Prostate gland (tissue), 2 donors: ENCODE measurements at regions of chr2 and their contacts with region 1.

Region 1: GRCh38 chr2:67840460-67841068 is 222.2 kb downstream of the C1D start:
- DNase-seq: peak; percentile 61
- H3K4me3 ChIP-seq: no peak overlapping the region
- H3K27ac ChIP-seq: no peak overlapping the region
- H3K4me1 ChIP-seq: no peaks in the 10 kb centered on the region
- H3K27me3 ChIP-seq: no peaks in the 10 kb centered on the region
- CTCF ChIP-seq: peak; percentile 63 to 90 (median 78)
- POLR2A ChIP-seq: no peak

Region 2: GRCh38 chr2:66429071-66429477 is 1411.5 kb before region 1 on chr2:
- intact Hi-C with region 1: loop called (anchors 5 kb)
- DNase-seq: peak; percentile 39
- H3K4me3 ChIP-seq: no peak overlapping the region
- H3K27ac ChIP-seq: no peak overlapping the region
- H3K4me1 ChIP-seq: no peaks in the 10 kb centered on the region
- H3K27me3 ChIP-seq: peaks cover 20% of the 10 kb centered on the region
- CTCF ChIP-seq: peak; percentile 63 to 90 (median 70)
- POLR2A ChIP-seq: no peak

Region 3: DNA sequence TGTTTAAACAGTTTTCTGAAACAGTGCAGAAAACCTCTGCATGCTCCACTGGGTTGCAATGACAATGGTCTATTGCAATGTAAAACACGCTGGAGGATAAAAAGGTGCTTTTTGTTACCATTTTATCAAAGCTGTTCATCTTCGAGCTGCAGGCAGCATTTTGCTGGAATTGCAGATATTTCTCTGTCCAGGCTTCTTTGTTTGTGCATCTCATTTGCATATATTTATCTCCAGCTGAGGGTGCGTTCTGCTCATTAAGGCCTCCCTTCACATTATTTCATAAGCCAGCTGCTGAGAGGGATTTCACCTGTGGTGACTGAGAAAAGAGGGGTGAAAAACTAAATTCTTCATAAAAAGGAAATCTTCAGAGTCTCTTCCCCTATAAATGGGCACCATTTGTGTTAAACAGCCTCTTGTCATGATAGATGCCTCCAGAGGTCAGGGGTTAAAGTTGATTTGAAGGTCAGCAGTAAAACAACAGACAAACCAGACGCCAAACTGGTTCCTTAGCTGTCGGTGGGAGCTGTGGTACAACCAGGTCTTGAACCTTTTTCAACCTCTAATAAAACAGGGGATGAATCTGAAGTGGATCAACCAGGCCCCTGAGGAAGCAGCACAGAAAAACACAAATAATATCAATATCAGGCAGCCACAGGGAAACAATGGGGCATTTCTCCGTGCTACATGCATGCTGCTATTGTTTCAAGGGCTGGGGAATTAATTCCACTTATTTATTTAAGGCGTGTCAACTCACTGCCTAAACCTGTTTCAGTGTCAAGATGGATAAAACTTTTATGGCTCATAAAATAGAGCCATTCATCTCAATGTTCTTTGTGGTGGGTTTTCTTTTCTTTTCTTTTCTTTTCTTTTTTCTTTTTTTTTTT is 1140.5 kb before region 1 on chr2:
- intact Hi-C with region 1: loop called (anchors 10 kb)
- DNase-seq: no peak
- H3K4me3 ChIP-seq: no peak overlapping the region
- H3K27ac ChIP-seq: peak overlapping the region; percentile 45
- H3K4me1 ChIP-seq: peaks cover 9% of the 10 kb centered on the region
- H3K27me3 ChIP-seq: no peaks in the 10 kb centered on the region
- CTCF ChIP-seq: no peak
- POLR2A ChIP-seq: no peak

Region 4: GRCh38 chr2:67259581-67260342 is 580.8 kb before region 1 on chr2:
- intact Hi-C with region 1: loop called (anchors 5 kb)
- DNase-seq: no peak
- H3K4me3 ChIP-seq: no peak overlapping the region
- H3K27ac ChIP-seq: peak overlapping the region; percentile 36 to 53
- H3K4me1 ChIP-seq: no peaks in the 10 kb centered on the region
- H3K27me3 ChIP-seq: no peaks in the 10 kb centered on the region
- CTCF ChIP-seq: no peak
- POLR2A ChIP-seq: no peak

Region 5: GRCh38 chr2:67666386-67667053 is 174.0 kb before region 1 on chr2:
- intact Hi-C with region 1: loop called (anchors 5 kb)
- DNase-seq: peak; percentile 4
- H3K4me3 ChIP-seq: no peak overlapping the region
- H3K27ac ChIP-seq: peak overlapping the region in 1 of 2 donors; percentile 29
- H3K4me1 ChIP-seq: no peaks in the 10 kb centered on the region
- H3K27me3 ChIP-seq: no peaks in the 10 kb centered on the region
- CTCF ChIP-seq: no peak
- POLR2A ChIP-seq: no peak

Region 6: GRCh38 chr2:67930156-67930555 is 89.6 kb after region 1 on chr2:
- intact Hi-C with region 1: no loop called
- DNase-seq: no peak
- H3K4me3 ChIP-seq: no peak overlapping the region
- H3K27ac ChIP-seq: no peak overlapping the region
- H3K4me1 ChIP-seq: no peaks in the 10 kb centered on the region
- H3K27me3 ChIP-seq: no peaks in the 10 kb centered on the region
- CTCF ChIP-seq: no peak
- POLR2A ChIP-seq: no peak